ENCODE measurements at regions of chr3 and their contacts with region 1.

Region 1: DNA sequence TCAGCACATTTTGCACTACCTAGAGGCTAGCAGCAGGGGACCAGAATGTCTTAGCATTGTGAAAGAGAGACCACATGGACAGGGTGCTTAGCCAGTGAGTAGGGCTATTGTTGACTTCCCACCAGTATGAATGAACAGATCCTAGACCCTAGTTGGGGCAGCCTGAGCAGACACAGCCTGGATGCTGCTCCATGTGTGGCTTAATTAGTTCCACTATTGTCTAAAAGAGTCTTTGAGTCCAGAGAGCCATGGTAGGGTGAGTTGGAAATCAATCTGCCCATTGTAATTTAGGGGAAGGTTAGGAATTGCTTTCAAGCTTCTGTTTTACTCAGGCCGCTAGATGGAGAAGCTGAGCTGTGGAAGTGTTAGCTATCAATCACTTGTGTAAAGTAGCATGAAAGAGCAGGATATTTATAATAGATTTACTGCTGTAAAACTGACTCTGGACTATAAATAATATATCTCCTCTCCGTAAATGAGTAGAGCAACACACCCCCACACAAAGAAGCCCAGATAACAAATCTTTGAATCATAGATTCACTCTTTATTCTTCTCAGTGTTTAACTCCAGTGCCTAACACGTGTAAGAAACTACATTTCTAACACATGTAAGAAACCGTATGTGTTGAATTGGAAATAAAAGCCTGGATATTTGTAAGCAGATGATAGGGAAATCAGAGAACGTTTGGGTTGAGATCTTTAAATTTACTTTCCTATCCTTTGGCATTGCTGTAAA is 4.1 kb upstream of the GCSAM start:
- DNase-seq: peak in 1 of 2 experiments; percentile 55
- H3K4me3 ChIP-seq: no peak overlapping the region
- H3K4me3 Mint-ChIP-seq: no peak overlapping the region
- H3K27ac Mint-ChIP-seq: no peak overlapping the region
- H3K4me1 ChIP-seq: no peaks in the 10 kb centered on the region
- H3K4me1 Mint-ChIP-seq: peaks cover 5% of the 10 kb centered on the region
- H3K27me3 ChIP-seq: no peaks in the 10 kb centered on the region
- H3K27me3 Mint-ChIP-seq: no peaks in the 10 kb centered on the region
- CTCF ChIP-seq: peak; percentile 66 to 79

Region 2: GRCh38 chr3:111819912-111820311 is 317.2 kb before region 1 on chr3:
- CTCF ChIA-PET with region 1: no interaction called
- POLR2A ChIA-PET with region 1: no interaction called
- intact Hi-C with region 1: no loop called
- DNase-seq: no peak
- H3K4me3 ChIP-seq: no peak overlapping the region
- H3K4me3 Mint-ChIP-seq: no peak overlapping the region
- H3K27ac Mint-ChIP-seq: no peak overlapping the region
- H3K4me1 ChIP-seq: no peaks in the 10 kb centered on the region
- H3K4me1 Mint-ChIP-seq: peaks cover 7% of the 10 kb centered on the region
- H3K27me3 ChIP-seq: no peaks in the 10 kb centered on the region
- H3K27me3 Mint-ChIP-seq: no peaks in the 10 kb centered on the region
- CTCF ChIP-seq: no peak

Region 3: DNA sequence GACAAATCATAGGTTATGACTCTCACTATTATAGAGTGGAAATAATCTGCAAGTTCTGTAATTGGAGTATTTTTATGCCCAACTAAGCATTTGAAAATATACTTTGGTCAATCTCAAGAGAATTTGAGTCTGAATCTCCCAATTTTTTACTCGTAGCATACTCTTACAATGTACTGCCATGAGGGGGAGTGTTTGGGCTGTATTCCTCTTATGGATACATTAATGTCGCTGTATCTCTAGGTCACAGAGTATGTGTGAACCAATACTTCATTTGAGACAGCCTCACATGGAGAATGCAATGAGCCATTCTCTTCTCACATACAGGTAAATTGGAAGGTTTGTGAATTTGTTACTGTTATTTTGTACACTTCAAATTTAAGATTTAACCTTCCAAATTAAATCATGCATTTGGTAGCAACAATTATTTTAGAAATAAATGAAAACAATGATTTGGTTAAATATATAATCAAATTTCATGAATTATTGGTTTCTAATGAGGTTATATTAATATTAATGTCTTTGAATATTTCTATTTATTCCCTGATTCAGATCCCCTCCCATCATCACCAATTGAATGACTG is 190.3 kb after region 1 on chr3:
- CTCF ChIA-PET with region 1: interaction called, 7 read pairs
- POLR2A ChIA-PET with region 1: no interaction called
- intact Hi-C with region 1: loop called (anchors 2 kb)
- DNase-seq: peak in 1 of 2 experiments; percentile 66
- H3K4me3 ChIP-seq: no peak overlapping the region
- H3K4me3 Mint-ChIP-seq: no peak overlapping the region
- H3K27ac Mint-ChIP-seq: no peak overlapping the region
- H3K4me1 ChIP-seq: peaks cover 8% of the 10 kb centered on the region
- H3K4me1 Mint-ChIP-seq: peaks cover 12% of the 10 kb centered on the region
- H3K27me3 ChIP-seq: no peaks in the 10 kb centered on the region
- H3K27me3 Mint-ChIP-seq: no peaks in the 10 kb centered on the region
- CTCF ChIP-seq: peak; percentile 47 to 60

Region 4: DNA sequence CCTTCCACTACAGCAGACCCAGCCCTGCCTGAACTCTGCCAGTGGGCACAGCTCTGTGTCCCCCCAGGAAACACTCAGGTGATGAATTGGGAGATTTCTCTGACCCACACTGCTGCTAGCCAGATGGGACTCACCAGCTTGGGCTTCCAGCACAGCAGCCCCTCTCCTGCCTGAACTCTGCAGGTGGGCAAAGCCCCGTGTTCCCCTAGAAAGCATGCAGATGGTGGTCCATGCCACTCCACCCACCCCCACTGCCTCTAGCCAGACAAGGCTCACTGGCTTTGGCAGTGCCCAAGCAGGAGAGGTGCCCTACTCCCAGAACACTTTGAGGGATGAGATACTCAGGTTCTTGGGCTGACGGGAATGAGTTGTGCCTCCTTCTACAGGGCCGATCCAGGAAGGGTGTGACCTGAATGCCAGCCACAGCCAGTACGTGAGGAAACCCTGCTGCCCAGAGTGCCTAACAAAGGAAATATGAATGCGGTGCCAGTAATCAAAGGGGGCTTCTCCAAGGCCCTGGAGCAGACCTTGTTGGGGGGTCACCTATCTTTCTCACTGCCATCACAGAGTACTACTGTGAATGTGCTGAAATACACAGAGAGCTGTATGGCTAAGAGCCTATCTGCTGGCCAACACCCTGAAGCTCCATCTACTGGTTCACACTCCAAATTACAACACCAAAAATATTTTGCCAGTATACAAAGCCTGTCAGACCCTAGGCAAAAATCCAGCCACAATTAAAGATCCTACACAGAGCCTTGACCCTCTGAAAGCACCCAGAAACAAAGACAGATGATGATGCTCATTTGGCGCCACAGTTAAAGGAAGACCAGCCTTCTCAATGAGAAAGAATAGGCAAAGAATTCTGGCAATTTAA is 300.3 kb after region 1 on chr3:
- CTCF ChIA-PET with region 1: no interaction called
- POLR2A ChIA-PET with region 1: no interaction called
- intact Hi-C with region 1: loop called (anchors 1 kb)
- DNase-seq: peak in 1 of 2 experiments; percentile 18
- H3K4me3 ChIP-seq: no peak overlapping the region
- H3K4me3 Mint-ChIP-seq: no peak overlapping the region
- H3K27ac Mint-ChIP-seq: no peak overlapping the region
- H3K4me1 ChIP-seq: no peaks in the 10 kb centered on the region
- H3K4me1 Mint-ChIP-seq: no peaks in the 10 kb centered on the region
- H3K27me3 ChIP-seq: no peaks in the 10 kb centered on the region
- H3K27me3 Mint-ChIP-seq: peaks cover 6% of the 10 kb centered on the region
- CTCF ChIP-seq: peak; percentile 9 to 35

Region 5: GRCh38 chr3:112519424-112520001 is 382.4 kb after region 1 on chr3:
- CTCF ChIA-PET with region 1: no interaction called
- POLR2A ChIA-PET with region 1: no interaction called
- intact Hi-C with region 1: loop called (anchors 1 kb)
- DNase-seq: peak; percentile 35 to 47
- H3K4me3 ChIP-seq: no peak overlapping the region
- H3K4me3 Mint-ChIP-seq: no peak overlapping the region
- H3K27ac Mint-ChIP-seq: no peak overlapping the region
- H3K4me1 ChIP-seq: no peaks in the 10 kb centered on the region
- H3K4me1 Mint-ChIP-seq: no peaks in the 10 kb centered on the region
- H3K27me3 ChIP-seq: no peaks in the 10 kb centered on the region
- H3K27me3 Mint-ChIP-seq: no peaks in the 10 kb centered on the region
- CTCF ChIP-seq: peak; percentile 67 to 74

Region 6: GRCh38 chr3:112531358-112531781 is 394.2 kb after region 1 on chr3:
- CTCF ChIA-PET with region 1: no interaction called
- POLR2A ChIA-PET with region 1: no interaction called
- intact Hi-C with region 1: loop called (anchors 1 kb)
- DNase-seq: no peak
- H3K4me3 ChIP-seq: no peak overlapping the region
- H3K4me3 Mint-ChIP-seq: no peak overlapping the region
- H3K27ac Mint-ChIP-seq: no peak overlapping the region
- H3K4me1 ChIP-seq: no peaks in the 10 kb centered on the region
- H3K4me1 Mint-ChIP-seq: no peaks in the 10 kb centered on the region
- H3K27me3 ChIP-seq: no peaks in the 10 kb centered on the region
- H3K27me3 Mint-ChIP-seq: no peaks in the 10 kb centered on the region
- CTCF ChIP-seq: peak in 1 of 2 experiments; percentile 50